ENCODE measurements at regions of chr10 and their contacts with region 1.

Region 1: GRCh38 chr10:5283305-5284158 is 81.2 kb upstream of the UCN3 start:
- DNase-seq: no peak
- H3K4me3 ChIP-seq: no peak overlapping the region
- CTCF ChIP-seq: peak; percentile 70

Region 2: GRCh38 chr10:5305374-5305773 is 21.8 kb after region 1 on chr10:
- CTCF ChIA-PET with region 1: interaction called, 10 read pairs
- POLR2A ChIA-PET with region 1: no interaction called
- DNase-seq: no peak
- H3K4me3 ChIP-seq: no peak overlapping the region
- CTCF ChIP-seq: peak; percentile 29

Region 3: DNA sequence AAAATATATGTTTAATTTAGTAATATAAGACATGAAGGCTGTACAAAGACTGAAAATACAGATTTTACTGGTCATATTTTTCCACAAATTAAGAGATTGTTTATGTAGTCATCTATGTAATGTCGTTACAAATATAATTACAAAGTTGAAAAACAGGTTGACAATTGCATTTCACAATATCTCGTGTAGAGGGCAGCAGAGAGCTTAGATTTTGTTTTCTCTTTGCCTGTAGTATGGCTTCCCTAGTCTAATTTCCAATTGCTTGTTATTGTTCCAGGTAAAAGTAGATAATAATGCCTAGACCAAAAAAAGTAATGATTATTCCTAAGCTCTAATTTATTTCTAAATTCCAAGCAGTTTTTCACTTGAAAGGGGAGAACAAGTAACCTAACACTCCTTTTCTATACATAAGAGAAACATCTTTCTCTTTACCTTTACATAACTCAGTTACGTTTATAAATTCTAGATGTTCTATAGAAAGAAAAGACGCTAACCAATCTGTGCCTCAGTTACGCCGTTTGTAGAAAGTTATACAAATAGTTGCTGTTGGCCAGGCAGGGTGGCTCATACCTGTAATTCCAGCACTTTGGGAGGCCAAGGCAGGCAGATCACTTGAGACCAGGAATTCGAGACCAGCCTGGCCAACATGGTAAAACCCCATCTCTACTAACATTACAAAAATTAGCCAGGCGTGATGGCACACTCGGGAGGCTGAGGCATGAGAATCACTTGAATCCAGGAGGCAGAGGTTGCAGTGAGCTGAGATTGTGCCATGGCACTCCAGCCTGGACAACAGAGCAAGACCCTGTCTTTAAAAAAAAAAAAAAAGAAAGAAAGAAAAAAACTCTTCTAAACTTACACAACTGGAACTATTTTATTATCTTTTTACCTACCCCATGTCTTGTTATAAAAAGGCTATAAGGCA is 158.8 kb after region 1 on chr10:
- CTCF ChIA-PET with region 1: no interaction called
- POLR2A ChIA-PET with region 1: no interaction called
- DNase-seq: no peak
- H3K4me3 ChIP-seq: no peak overlapping the region
- CTCF ChIP-seq: peak; percentile 63

Measured in AG04449 (cell line).